ENCODE measurements at regions of chr12 and their contacts with region 1.

Region 1: DNA sequence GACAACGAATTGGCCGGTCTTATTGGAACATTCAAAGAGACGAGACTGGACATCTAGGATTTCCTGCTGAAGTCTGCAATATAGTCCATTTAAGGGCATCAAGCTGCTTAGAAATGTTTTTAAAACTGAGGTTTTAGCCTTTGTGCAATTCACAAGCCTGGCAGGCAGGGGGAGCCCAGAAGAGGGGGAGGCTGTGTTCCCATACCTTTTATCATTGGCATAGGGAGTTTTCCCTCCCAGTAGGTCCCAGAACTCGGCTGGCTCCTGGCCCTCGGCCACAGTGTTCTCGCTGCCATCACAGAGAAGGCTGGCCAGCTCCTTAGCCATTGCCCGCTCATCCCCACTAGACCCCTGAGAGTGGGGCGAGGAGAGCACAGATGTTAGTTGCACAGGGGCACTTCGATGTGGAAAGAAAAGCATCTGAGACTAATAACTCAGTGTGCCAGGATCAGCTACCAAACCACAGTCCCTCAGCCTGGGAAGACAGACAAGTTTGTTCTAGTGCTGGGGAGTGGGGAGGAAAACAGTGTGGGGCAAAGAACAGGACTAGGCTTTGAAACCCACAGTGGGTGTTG is 15.1 kb downstream of the AVIL start:
- DNase-seq: peak; percentile 75
- ATAC-seq: peak; percentile 98
- H3K4me3 Mint-ChIP-seq: no peak overlapping the region
- H3K27ac Mint-ChIP-seq: no peak overlapping the region
- H3K4me1 Mint-ChIP-seq: no peaks in the 10 kb centered on the region
- H3K27me3 Mint-ChIP-seq: no peaks in the 10 kb centered on the region
- CTCF ChIP-seq: peak; percentile 49; the same call in 1 of the 2 replicates

Region 2: DNA sequence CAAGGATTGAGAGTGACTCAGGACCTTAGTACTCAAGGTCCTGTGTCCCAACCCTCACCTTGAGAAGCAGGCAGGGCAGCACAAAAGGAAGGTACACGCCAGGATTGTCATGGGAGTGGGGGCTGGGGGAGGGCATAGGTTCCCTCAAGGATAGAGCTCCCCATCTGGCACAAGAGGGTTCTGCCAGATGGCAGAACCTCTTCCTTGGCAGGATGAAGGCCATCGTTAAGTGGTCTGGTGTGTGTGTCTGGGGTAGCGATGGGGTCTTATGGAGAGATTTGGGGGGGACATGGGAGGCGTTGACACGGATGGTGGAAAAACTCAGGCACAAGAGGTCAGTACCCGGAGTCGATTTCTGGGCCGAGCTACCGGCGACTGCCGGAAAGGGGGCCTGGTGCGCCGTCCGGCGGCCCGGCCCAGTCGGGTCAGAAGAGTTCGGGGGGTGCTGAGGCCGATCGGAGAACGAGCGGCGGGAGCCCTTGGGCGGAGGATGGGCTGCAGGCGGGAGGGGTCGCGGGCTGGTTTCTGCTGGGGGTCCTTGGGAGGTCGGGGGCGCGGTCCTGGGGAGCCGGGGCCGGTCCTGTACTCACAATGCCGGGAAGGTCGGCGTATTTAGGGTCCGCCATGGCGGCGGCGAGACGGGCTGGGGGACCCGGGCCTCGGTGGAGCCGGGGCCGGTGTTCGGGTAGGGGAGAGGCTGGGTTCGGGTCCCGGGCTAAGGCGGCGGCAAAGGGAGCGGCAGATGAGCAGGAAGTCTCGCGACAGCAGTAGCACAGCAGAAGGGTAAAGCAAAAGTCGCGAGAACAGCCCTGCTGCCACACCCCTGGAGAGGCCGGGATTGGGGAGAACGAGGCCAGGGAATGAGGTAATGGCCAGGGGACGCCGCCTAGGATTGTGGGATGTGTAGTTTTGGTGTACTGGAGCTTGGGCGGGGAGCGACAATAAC is 256.7 kb before region 1 on chr12 and contains the start of gene DCTN2:
- CTCF ChIA-PET with region 1: no interaction called
- POLR2A ChIA-PET with region 1: no interaction called
- DNase-seq: peak; percentile 97
- ATAC-seq: peak; percentile 91
- H3K4me3 Mint-ChIP-seq: peak within 1 kb of the TSS; percentile 99
- H3K27ac Mint-ChIP-seq: peak within 1 kb of the TSS; percentile 93
- H3K4me1 Mint-ChIP-seq: peaks cover 42% of the 10 kb centered on the region
- H3K27me3 Mint-ChIP-seq: peaks cover 24% of the 10 kb centered on the region
- CTCF ChIP-seq: no peak
- total RNA-seq, gene DCTN2: 93.5 to 94.4 TPM (median 94.4 TPM) in 3 replicates

Region 3: DNA sequence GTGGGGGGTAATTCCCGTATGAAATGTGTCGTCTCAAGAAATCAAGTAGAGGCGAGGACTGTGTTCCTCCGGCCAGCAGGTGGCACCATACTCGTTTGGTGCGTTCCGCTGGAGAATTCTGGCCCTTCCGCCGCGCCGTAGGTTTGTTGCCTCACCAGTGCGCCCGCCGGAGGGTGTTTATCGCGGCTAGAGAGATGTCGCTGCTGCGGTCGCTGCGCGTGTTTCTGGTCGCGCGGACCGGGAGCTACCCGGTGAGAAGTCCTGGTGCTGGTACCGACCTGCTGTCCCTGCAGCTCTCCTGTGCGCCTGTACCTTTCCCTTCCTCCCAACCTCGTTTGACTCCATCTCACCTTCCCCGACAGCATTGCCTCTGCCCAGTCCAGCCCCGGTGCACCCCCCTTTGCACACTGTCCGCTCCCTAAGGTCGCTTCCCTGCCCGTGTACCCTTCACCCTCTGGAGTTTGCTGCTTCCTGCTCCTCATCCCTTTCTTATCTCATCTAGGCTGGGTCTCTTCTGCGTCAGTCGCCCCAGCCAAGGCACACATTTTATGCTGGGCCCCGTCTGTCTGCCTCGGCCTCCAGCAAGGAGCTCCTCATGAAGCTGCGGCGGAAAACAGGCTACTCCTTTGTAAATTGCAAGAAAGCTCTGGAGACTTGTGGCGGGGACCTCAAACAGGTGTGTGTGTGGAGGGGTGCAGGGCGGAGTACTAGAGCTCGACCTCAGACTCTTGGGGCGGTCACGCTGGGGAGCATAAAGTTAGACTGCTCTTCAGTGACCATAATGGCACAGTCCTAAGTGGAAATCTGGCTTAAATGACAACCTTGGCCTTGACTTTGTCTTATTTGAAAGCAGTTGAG is 20.6 kb before region 1 on chr12 and contains the start of gene TSFM:
- CTCF ChIA-PET with region 1: interaction called, 17 read pairs
- POLR2A ChIA-PET with region 1: interaction called, 3 read pairs
- DNase-seq: peak; percentile 96
- ATAC-seq: peak; percentile 91
- H3K4me3 Mint-ChIP-seq: peak within 1 kb of the TSS; percentile 100
- H3K27ac Mint-ChIP-seq: peak within 1 kb of the TSS; percentile 97
- H3K4me1 Mint-ChIP-seq: peaks cover 4% of the 10 kb centered on the region; the same call in 1 of the 2 replicates
- H3K27me3 Mint-ChIP-seq: no peaks in the 10 kb centered on the region
- CTCF ChIP-seq: peak; percentile 77
- total RNA-seq, gene TSFM: 48.6 to 49.5 TPM (median 48.7 TPM) in 3 replicates

Region 4: GRCh38 chr12:57815177-57816000 is 12.0 kb after region 1 on chr12:
- CTCF ChIA-PET with region 1: interaction called, 60 read pairs
- POLR2A ChIA-PET with region 1: interaction called, 4 read pairs
- DNase-seq: peak; percentile 57
- ATAC-seq: peak; percentile 94
- H3K4me3 Mint-ChIP-seq: peak overlapping the region; percentile 33
- H3K27ac Mint-ChIP-seq: no peak overlapping the region
- H3K4me1 Mint-ChIP-seq: peaks cover 8% of the 10 kb centered on the region; the same call in 1 of the 2 replicates
- H3K27me3 Mint-ChIP-seq: no peaks in the 10 kb centered on the region; the same call in 1 of the 2 replicates
- CTCF ChIP-seq: no peak

Region 5: GRCh38 chr12:57852620-57853500 is 49.5 kb after region 1 on chr12:
- CTCF ChIA-PET with region 1: interaction called, 18 read pairs
- POLR2A ChIA-PET with region 1: no interaction called
- DNase-seq: peak; percentile 83
- ATAC-seq: peak; percentile 82
- H3K4me3 Mint-ChIP-seq: peak overlapping the region; percentile 66
- H3K27ac Mint-ChIP-seq: peak overlapping the region; percentile 91
- H3K4me1 Mint-ChIP-seq: peaks cover 40% of the 10 kb centered on the region
- H3K27me3 Mint-ChIP-seq: peaks cover 25% of the 10 kb centered on the region
- CTCF ChIP-seq: no peak

Measured in WTC11 (cell line).